ENCODE measurements at regions of chr5 and their contacts with region 1.

Region 1: DNA sequence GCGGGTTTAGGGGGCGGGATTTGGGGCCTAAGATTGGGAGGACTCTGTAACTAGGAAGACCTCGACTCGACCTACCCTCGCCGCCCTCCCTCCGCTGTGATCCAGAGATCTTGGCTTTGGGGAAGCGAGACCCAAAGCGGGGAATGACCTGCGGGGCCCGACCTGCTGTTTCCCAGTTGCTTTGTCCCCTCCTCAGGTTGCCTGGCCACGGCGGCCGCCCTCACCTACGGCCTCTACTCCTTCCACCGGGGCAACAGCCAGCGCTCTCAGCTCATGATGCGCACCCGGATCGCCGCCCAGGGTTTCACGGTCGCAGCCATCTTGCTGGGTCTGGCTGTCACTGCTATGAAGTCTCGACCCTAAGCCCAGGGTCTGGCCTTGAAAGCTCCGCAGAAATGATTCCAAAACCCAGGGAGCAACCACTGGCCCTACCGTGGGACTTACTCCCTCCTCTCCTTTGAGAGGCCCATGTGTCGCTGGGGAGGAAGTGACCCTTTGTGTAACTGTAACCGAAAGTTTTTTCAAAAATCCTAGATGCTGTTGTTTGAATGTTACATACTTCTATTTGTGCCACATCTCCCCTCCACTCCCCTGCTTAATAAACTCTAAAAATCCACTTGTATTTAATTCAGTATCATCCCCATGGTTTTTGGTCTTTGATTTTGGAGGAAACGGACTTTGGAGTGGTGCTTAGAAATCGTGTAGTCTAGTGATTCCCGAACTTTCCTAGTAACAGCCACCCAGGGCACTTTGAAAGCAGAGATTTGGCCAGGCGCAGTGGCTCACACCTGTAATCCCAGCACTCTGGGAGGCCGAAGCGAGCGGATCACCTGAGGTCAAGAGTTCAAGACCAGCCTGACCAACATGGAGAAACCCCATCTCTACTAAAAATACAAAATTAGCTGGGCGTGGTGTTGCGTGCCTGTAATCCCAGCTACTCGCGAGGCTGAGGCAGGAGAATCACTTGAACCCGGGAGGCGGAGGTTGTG is 878 bp downstream of the HIGD2A start:
- DNase-seq: no peak

Region 2: DNA sequence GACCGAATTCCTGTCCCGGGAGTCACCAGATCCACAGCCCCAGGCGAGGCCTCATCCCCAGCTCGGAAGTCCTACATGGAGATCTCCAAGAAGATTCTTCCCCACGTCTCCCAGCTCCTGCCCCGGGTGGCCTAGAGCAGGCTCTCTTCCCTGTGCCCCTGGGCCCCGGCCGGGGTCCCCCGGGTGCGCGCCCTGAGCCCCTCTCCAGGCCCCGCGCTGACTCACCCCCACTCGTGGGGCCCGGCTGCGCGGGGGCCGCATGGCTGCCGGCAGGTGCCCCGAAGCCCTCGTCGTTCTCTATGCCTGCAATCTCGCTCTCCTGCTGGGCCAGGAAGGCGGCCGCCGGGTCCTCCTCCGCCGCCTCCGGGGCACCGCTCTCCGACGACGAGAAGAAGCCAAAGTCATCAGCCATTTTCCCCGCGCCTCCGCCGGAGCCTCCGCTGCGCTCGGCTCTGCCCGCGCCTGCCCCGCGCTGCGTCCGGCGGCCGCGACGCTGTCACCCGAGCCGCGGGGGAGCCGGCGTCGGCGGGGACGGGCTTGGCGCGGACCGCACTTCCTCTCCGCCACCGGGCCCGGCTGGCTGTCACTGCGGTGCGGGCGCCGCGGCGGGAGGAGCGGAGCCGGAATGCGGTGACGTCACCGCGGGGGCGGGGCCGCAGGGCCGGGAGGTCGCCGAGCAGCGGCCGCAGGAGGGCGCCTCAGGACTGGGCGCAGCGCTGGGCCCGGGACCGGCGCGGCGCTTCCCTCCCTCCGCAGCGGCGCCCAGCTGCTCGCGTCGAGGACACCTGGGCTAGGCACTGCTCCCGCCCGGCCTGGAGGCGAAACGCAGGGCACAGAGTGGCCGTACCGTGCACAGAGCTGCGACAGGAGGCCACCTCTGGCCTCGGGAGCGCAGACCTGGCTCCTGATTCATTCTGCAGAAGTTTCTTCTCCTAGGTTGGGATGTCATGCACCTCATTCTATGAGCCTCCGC is 26.8 kb after region 1 on chr5 and contains the start of gene CLTB:
- intact Hi-C with region 1: loop called (anchors 2 kb)
- DNase-seq: peak; percentile 60 to 98 (median 93)

Region 3: DNA sequence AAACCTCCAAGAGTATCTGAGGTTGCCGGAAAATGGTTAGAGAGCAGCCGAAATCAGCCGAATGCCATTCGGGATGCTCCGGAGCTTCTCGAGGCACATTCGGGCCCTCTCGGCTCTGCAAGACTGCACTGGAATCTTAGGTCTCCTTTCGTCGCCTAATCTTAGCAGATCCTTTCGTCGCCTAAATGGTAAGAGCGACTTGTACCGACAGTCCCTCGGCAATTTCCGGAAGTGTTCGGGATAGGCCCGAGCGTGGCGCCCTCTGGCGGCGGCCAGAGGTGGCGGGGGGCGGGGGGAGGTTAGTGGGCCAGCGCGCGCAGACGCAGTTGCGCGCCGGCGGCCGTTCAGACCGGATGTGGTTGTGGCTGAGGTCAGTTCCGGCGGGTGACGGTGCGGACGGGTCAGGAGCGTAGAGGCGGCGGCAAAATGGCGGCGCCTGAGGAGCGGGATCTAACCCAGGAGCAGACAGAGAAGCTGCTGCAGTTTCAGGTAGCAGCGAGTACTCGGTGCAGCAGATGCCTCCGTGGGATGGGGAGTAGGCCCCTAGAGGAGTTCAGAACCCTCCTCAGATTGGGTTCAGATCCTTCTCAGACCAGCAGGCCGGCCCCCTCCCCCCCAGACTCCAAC is 58.7 kb after region 1 on chr5 and contains the start of gene FAF2:
- intact Hi-C with region 1: loop called (anchors 2 kb)
- DNase-seq: peak; percentile 86 to 98 (median 95)